H1 (cell line): ENCODE measurements at regions of chr6 and their contacts with region 1.

Region 1: GRCh38 chr6:156589281-156589680 is 187.9 kb upstream of the ARID1B start:
- DNase-seq: no peak
- H3K4me3 ChIP-seq: no peak overlapping the region
- H3K27ac ChIP-seq: no peak overlapping the region
- H3K4me1 ChIP-seq: no peaks in the 10 kb centered on the region
- H3K27me3 ChIP-seq: no peaks in the 10 kb centered on the region
- CTCF ChIP-seq: no peak
- EP300 ChIP-seq: no peak
- POLR2A ChIP-seq: no peak
- RAD21 ChIP-seq: no peak

Region 2: GRCh38 chr6:156564127-156564806 is 25.0 kb before region 1 on chr6:
- CTCF ChIA-PET with region 1: interaction called, 12 read pairs
- POLR2A ChIA-PET with region 1: no interaction called
- DNase-seq: peak; percentile 23 to 93
- H3K4me3 ChIP-seq: no peak overlapping the region
- H3K27ac ChIP-seq: no peak overlapping the region
- H3K4me1 ChIP-seq: no peaks in the 10 kb centered on the region
- H3K27me3 ChIP-seq: no peaks in the 10 kb centered on the region
- CTCF ChIP-seq: peak; percentile 89 to 93 (median 90)
- EP300 ChIP-seq: no peak
- POLR2A ChIP-seq: no peak
- RAD21 ChIP-seq: peak; percentile 88 to 91